RWPE1 (cell line): ENCODE measurements at regions of chr2 and their contacts with region 1.

Region 1: GRCh38 chr2:20106746-20107145 is 55.3 kb upstream of the LAPTM4A start:
- DNase-seq: peak; percentile 40
- H3K27ac ChIP-seq: peak overlapping the region; percentile 64
- CTCF ChIP-seq: peak; percentile 86

Region 2: GRCh38 chr2:20179755-20180594 is 73.2 kb after region 1 on chr2:
- CTCF ChIA-PET with region 1: interaction called, 12 read pairs
- POLR2A ChIA-PET with region 1: interaction called, 3 read pairs
- DNase-seq: peak; percentile 90
- H3K27ac ChIP-seq: peak overlapping the region; percentile 99
- CTCF ChIP-seq: peak; percentile 58